Activated CD4-positive, alpha-beta memory T cell treated with anti-CD3 and anti-CD28 coated beads for 36 hours (primary cell): ENCODE measurements at regions of chr16 and their contacts with region 1.

Region 1: GRCh38 chr16:89560378-89561141 is at the start of gene RPL13:
- DNase-seq: peak; percentile 96
- H3K4me3 Mint-ChIP-seq: peak within 1 kb of the TSS; percentile 93
- H3K27ac Mint-ChIP-seq: peak within 1 kb of the TSS; percentile 91
- H3K4me1 Mint-ChIP-seq: peaks cover 49% of the 10 kb centered on the region
- H3K27me3 Mint-ChIP-seq: no peaks in the 10 kb centered on the region
- total RNA-seq, gene RPL13: 3,430 to 3,468 TPM

Region 2: GRCh38 chr16:89319883-89320781 is 240.4 kb before region 1 on chr16:
- CTCF ChIA-PET with region 1: interaction called, 9 read pairs
- POLR2A ChIA-PET with region 1: no interaction called
- intact Hi-C with region 1: loop called (anchors 5 kb)
- DNase-seq: peak; percentile 74
- H3K4me3 Mint-ChIP-seq: peak overlapping the region; percentile 21
- H3K27ac Mint-ChIP-seq: peak overlapping the region; percentile 76
- H3K4me1 Mint-ChIP-seq: peaks cover 96% of the 10 kb centered on the region
- H3K27me3 Mint-ChIP-seq: no peaks in the 10 kb centered on the region

Region 3: DNA sequence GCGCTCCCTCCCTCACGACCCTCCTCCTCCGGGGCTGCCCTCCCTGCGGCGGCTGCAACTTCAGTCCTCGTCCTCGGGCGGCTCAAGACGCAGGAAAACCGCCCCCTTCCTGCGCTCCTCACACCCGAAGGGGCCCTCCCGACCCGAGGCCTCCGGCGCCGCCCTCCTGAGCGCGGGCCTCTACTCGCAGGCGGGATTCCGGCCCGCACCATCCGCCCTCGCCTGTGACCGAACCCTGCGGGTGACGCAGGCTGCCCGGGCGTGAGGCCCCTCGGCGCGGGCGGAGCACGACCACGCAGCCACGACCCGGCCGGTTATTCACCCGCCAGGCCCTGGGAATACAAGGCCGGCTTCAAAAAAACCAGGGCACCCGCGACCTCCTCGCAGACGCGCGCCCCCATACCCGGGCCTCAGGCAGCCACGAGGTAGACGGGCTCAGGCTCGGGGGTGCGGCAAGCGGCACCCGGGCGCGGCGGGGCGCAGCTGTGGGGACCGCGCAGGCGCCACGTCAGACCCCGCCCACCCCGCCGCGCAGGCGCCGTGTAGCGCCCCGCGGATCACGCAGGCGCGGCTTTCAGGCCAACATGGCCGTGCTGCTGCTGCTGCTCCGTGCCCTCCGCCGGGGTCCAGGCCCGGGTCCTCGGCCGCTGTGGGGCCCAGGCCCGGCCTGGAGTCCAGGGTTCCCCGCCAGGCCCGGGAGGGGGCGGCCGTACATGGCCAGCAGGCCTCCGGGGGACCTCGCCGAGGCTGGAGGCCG is 52.5 kb before region 1 on chr16 and contains the start of gene SPG7:
- CTCF ChIA-PET with region 1: interaction called, 19 read pairs
- POLR2A ChIA-PET with region 1: interaction called, 3 read pairs
- intact Hi-C with region 1: loop called (anchors 5 kb)
- DNase-seq: peak; percentile 93
- H3K4me3 Mint-ChIP-seq: peak within 1 kb of the TSS; percentile 94
- H3K27ac Mint-ChIP-seq: peak within 1 kb of the TSS; percentile 94
- H3K4me1 Mint-ChIP-seq: peaks cover 25% of the 10 kb centered on the region
- H3K27me3 Mint-ChIP-seq: no peaks in the 10 kb centered on the region
- total RNA-seq, gene SPG7: 67.9 to 70.4 TPM

Region 4: GRCh38 chr16:89525146-89525913 is 35.2 kb before region 1 on chr16:
- CTCF ChIA-PET with region 1: no interaction called
- POLR2A ChIA-PET with region 1: no interaction called
- intact Hi-C with region 1: no loop called
- DNase-seq: no peak
- H3K4me3 Mint-ChIP-seq: no peak overlapping the region
- H3K27ac Mint-ChIP-seq: no peak overlapping the region
- H3K4me1 Mint-ChIP-seq: no peaks in the 10 kb centered on the region
- H3K27me3 Mint-ChIP-seq: no peaks in the 10 kb centered on the region

Region 5: DNA sequence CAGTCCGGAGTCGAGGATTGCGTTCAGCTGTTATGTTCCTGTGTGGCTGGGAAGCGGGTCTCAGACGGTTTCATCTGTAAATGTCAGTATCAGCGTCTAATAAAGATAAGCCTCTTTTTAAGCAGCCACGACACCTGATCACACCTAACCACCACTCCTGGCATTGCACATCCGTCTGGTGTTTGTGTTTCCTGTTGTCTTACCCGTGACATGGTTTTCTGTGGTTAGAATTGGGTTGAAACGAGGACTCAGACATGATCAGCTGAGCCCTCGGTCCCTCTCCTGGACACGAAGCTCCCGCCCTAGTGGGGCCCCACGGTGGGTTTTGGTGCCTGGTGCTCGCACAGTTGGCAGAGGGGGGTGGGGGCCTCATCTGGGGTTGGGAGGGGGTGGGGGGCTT is 33.3 kb after region 1 on chr16:
- CTCF ChIA-PET with region 1: no interaction called
- POLR2A ChIA-PET with region 1: no interaction called
- intact Hi-C with region 1: no loop called
- DNase-seq: peak; percentile 53
- H3K4me3 Mint-ChIP-seq: no peak overlapping the region
- H3K27ac Mint-ChIP-seq: peak overlapping the region; percentile 13
- H3K4me1 Mint-ChIP-seq: peaks cover 9% of the 10 kb centered on the region
- H3K27me3 Mint-ChIP-seq: no peaks in the 10 kb centered on the region

Region 6: DNA sequence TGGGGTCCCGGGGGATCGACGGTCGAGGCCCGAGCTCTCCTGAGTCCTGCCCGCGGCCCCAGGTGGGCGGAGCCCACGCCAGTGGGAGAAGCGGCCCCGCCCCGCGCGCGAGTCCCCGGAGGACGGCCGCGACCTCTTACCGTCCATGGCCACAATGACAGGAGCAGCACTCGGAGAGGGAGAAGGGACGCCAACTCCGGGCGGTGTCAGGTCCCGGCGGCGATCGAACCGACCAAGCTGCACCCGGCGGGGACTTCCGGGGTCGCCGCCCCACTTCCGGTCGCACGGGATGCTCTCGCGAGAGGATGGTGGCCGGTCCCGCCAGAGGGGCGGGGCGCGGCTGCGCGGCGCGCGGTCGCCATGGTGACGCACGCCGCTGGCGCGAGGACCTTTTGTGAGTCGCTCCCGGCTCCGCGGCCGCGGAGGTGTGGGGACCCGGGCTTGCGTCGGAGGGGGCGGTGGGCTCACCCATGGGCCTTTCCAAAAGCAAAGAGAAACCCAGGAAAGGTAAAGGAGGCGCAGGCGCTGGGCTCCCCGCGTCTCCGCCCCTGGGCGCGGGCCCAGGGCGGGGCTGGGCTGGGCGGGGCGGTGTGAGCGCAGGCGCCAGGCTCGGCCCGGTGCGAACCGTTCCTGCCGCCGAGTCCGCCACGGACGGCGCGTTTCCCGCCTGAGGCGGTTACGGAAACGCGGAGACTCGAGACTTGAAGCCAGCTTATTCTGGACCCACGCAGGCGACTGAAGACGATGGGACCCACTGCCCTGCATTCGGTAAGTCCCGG is 97.1 kb after region 1 on chr16 and contains the starts of genes CHMP1A and SPATA33:
- CTCF ChIA-PET with region 1: no interaction called
- POLR2A ChIA-PET with region 1: interaction called, 3 read pairs
- intact Hi-C with region 1: loop called (anchors 5 kb)
- DNase-seq: peak; percentile 94
- H3K4me3 Mint-ChIP-seq: peak within 1 kb of the TSS; percentile 89
- H3K27ac Mint-ChIP-seq: peak within 1 kb of the TSS; percentile 76
- H3K4me1 Mint-ChIP-seq: peaks cover 35% of the 10 kb centered on the region
- H3K27me3 Mint-ChIP-seq: no peaks in the 10 kb centered on the region
- total RNA-seq, gene CHMP1A: 74.6 to 76.3 TPM
- total RNA-seq, gene SPATA33: 7.1 to 10.1 TPM